Posterior cingulate gyrus (tissue), 11 donors: ENCODE measurements at regions of chr3 and their contacts with region 1.

Region 1: GRCh38 chr3:19543212-19543841 is 390.7 kb downstream of the EFHB start:
- DNase-seq: peak in 1 of 10 donors; percentile 12

Region 2: GRCh38 chr3:19348929-19349564 is 194.3 kb before region 1 on chr3:
- intact Hi-C with region 1: loop called (anchors 5 kb)
- DNase-seq: no peak